OCI-LY7 (cell line): ENCODE measurements at regions of chr13 and their contacts with region 1.

Region 1: GRCh38 chr13:49240017-49240416 is 7.7 kb upstream of the CDADC1 start:
- DNase-seq: peak; percentile 61
- H3K4me3 ChIP-seq: no peak overlapping the region
- H3K27ac ChIP-seq: no peak overlapping the region
- H3K4me1 ChIP-seq: no peaks in the 10 kb centered on the region
- CTCF ChIP-seq: peak; percentile 86

Region 2: DNA sequence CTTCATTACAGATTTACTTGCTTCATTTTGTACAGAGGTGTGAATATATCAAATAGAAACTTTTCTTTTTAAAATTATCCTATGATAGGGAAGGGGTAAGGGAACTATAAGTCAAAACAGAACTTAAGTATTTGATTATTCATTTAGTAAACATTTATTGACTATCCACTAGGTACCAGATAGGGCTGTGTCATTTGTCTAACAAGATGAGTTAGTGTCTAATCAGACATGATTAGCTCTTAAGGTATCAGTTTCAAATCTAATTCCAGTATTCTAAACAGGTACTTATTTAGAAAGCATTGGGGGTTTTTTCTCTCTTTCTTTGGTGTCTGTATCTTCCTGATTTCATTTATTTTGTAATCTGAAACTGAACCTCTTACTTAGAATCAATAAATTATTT is 39.9 kb after region 1 on chr13:
- CTCF ChIA-PET with region 1: no interaction called
- POLR2A ChIA-PET with region 1: interaction called, 3 read pairs
- intact Hi-C with region 1: loop called (anchors 2 kb)
- DNase-seq: no peak
- H3K4me3 ChIP-seq: no peak overlapping the region
- H3K27ac ChIP-seq: no peak overlapping the region
- H3K4me1 ChIP-seq: no peaks in the 10 kb centered on the region
- CTCF ChIP-seq: no peak